ENCODE measurements at regions of chr16 and their contacts with region 1.

Region 1: DNA sequence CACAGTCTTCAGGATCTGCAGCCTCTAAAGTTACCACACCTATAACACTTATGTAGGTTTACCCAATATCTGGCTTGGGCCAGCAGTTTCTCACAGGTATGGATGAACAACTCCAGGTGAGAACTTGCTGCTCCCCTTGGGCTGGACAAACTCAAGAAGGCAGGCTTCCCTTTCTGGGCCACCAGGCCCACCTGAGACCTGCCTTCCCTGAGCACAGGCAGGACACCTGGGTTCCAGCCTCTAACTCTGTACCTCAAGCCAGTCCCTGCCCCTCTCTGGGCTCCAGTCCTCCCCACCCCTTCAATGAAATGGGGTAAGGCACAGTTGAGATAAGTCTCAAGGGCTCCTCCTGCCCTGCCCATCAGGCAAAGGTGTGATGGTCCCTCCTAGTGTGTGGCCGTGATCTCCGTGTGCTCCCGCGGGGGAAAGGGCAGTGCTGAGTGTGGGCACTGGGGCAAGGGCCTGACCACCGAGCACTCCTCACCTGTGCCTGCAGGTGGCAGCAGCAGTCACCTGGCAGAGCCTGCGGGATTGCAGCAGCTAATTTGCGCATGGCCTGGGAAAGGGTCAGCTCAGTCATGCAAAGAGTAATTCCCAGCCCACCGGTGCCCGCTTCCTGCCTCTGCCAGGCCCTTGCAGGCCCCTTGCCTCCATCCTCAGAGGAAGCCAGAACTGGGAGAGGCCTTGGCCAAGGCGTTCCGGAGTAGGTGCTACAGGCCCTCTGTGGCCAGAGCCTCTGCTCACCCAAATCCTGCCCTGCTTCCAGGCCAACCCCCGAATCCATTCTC is 28.2 kb upstream of the ADGRG1 start:
- DNase-seq: no peak
- H3K4me3 ChIP-seq: no peak overlapping the region
- CTCF ChIP-seq: peak; percentile 81

Region 2: DNA sequence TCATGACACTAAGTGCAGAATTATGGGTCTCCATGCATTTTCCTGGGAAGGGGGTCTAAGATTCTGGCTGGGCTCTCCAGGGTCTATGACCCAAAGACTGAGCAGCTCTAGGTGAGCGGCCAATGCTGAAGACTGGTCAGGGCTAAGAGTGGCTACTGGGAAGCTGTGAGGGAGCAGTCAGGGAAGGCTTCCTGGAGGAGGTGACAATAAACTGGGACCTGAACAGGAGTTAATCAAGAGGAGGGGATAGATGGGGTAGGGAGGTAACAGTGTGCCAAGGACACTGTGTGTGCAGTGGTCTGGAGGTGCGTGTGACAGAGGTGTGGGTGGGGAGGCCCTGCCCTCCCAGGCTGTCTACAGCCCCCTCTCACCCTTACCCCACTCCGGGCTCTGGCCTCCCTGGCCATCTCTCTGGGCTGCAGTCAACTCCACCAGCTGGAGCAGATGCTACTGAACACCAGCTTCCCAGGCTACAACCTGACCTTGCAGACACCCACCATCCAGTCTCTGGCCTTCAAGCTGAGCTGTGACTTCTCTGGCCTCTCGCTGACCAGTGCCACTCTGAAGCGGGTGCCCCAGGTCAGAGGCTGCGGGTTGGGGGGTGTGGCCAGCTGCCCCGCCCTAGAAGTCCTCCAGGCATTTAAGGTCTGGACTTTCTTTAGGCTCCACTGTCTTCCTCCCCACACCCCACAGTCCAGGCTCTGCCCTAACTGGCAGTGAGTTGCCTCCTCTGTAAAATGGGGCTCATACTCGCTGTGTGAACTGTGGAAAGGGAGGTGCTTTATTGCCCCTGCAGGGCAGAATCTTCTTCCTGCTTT is 37.4 kb before region 1 on chr16:
- CTCF ChIA-PET with region 1: no interaction called
- POLR2A ChIA-PET with region 1: no interaction called
- DNase-seq: no peak
- H3K4me3 ChIP-seq: no peak overlapping the region
- CTCF ChIP-seq: no peak

Region 3: GRCh38 chr16:57720142-57720575 is 119.9 kb after region 1 on chr16:
- CTCF ChIA-PET with region 1: interaction called, 13 read pairs
- POLR2A ChIA-PET with region 1: no interaction called
- DNase-seq: no peak
- H3K4me3 ChIP-seq: no peak overlapping the region
- CTCF ChIP-seq: peak; percentile 84

Region 4: DNA sequence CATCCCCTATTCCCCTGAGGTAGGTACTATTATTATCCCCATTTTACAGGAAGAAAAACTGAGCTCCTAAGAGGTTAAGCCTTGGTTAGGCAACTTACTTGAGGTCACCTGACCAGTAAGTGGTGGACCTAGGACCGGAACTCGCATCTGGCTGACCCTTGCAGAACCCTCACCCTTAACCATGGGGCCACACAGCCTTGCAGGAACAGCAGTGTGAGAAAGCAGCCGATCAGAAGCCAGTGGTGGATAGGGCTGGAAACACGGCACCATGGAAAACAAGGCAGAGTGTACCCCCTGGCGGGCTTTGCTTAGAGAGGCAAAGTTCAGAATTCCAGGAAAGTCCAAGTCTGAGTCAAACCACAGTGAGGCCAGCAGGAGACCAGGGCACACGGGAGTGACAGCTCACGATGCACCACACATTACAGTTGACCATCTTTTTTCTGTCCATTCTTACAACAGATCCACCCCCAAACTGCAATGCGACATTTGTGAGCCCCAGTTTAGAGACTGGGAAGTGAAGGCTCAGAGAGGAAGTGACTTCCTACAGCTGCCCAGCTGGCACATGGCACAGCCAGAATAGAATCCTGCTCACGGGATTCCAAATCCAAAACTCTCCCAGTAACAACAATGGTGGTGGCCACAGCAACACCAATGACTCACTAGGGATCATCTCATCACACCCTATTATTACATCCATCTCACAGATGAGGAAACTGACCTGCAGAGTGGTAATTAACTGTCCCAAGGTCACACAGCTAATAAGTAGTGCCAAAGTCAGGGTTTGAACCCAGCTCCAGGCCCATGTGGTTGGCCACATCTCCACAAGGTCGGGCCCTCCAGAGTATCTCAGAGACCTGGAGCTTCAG is 181.7 kb after region 1 on chr16:
- CTCF ChIA-PET with region 1: no interaction called
- POLR2A ChIA-PET with region 1: no interaction called
- DNase-seq: no peak
- H3K4me3 ChIP-seq: no peak overlapping the region
- CTCF ChIP-seq: no peak